ENCODE measurements at regions of chr20 and their contacts with region 1.

Region 1: GRCh38 chr20:43456809-43457639 is 672 bp upstream of the SRSF6 start:
- DNase-seq: peak; percentile 93
- ATAC-seq: peak; percentile 87
- H3K4me3 ChIP-seq: peak overlapping the region; percentile 54
- H3K27ac ChIP-seq: peak overlapping the region; percentile 98
- H3K4me1 ChIP-seq: peaks cover 4% of the 10 kb centered on the region; the same call in 1 of the 2 replicates
- H3K27me3 ChIP-seq: peaks cover 2% of the 10 kb centered on the region; the same call in 1 of the 2 replicates
- CTCF ChIP-seq: no peak
- POLR2A ChIP-seq: no peak
- RAD21 ChIP-seq: no peak

Region 2: GRCh38 chr20:43363506-43363905 is 93.5 kb before region 1 on chr20:
- CTCF ChIA-PET with region 1: no interaction called
- POLR2A ChIA-PET with region 1: no interaction called
- dilution Hi-C with region 1: no loop called
- in situ Hi-C with region 1: no loop called
- intact Hi-C with region 1: no loop called
- DNase-seq: no peak
- ATAC-seq: no peak
- H3K4me3 ChIP-seq: no peak overlapping the region
- H3K27ac ChIP-seq: no peak overlapping the region
- H3K4me1 ChIP-seq: no peaks in the 10 kb centered on the region
- H3K27me3 ChIP-seq: no peaks in the 10 kb centered on the region
- CTCF ChIP-seq: no peak
- POLR2A ChIP-seq: no peak
- RAD21 ChIP-seq: no peak

Region 3: GRCh38 chr20:43514062-43514999 is 57.3 kb after region 1 on chr20:
- CTCF ChIA-PET with region 1: no interaction called
- POLR2A ChIA-PET with region 1: interaction called, 15 read pairs
- dilution Hi-C with region 1: no loop called
- in situ Hi-C with region 1: no loop called
- intact Hi-C with region 1: loop called (anchors 2 kb)
- DNase-seq: peak; percentile 98
- ATAC-seq: peak; percentile 94
- H3K4me3 ChIP-seq: peak overlapping the region; percentile 92
- H3K27ac ChIP-seq: peak overlapping the region; percentile 52
- H3K4me1 ChIP-seq: 0 out of 2 replicates have a peak, but pooled peaks cover 4% of the 10 kb centered on the region
- H3K27me3 ChIP-seq: no peaks in the 10 kb centered on the region
- CTCF ChIP-seq: peak; percentile 31; the same call in 1 of the 2 replicates
- POLR2A ChIP-seq: no peak
- RAD21 ChIP-seq: no peak

Region 4: GRCh38 chr20:44092551-44093248 is 635.7 kb after region 1 on chr20:
- CTCF ChIA-PET with region 1: no interaction called
- POLR2A ChIA-PET with region 1: no interaction called
- dilution Hi-C with region 1: no loop called
- in situ Hi-C with region 1: loop called (anchors 10 kb)
- intact Hi-C with region 1: no loop called
- DNase-seq: peak; percentile 49
- ATAC-seq: peak; percentile 62
- H3K4me3 ChIP-seq: no peak overlapping the region
- H3K27ac ChIP-seq: no peak overlapping the region
- H3K4me1 ChIP-seq: peaks cover 3% of the 10 kb centered on the region
- H3K27me3 ChIP-seq: peaks cover 2% of the 10 kb centered on the region; the same call in 1 of the 2 replicates
- CTCF ChIP-seq: peak; percentile 56
- POLR2A ChIP-seq: no peak
- RAD21 ChIP-seq: peak; percentile 61

Region 5: GRCh38 chr20:44210422-44211176 is 753.6 kb after region 1 on chr20 and contains the start of gene OSER1:
- CTCF ChIA-PET with region 1: no interaction called
- POLR2A ChIA-PET with region 1: no interaction called
- dilution Hi-C with region 1: no loop called
- in situ Hi-C with region 1: no loop called
- intact Hi-C with region 1: loop called (anchors 10 kb)
- DNase-seq: peak; percentile 95
- ATAC-seq: peak; percentile 90
- H3K4me3 ChIP-seq: peak within 1 kb of the TSS; percentile 77
- H3K27ac ChIP-seq: peak within 1 kb of the TSS; percentile 75
- H3K4me1 ChIP-seq: peaks cover 4% of the 10 kb centered on the region; the same call in 1 of the 2 replicates
- H3K27me3 ChIP-seq: no peaks in the 10 kb centered on the region
- CTCF ChIP-seq: no peak
- POLR2A ChIP-seq: peak; percentile 92
- RAD21 ChIP-seq: no peak
- total RNA-seq, gene OSER1: 66.9 and 70.6 TPM in 2 replicates

Measured in IMR-90 (cell line).